OCI-LY7 (cell line): ENCODE measurements at regions of chr20 and their contacts with region 1.

Region 1: DNA sequence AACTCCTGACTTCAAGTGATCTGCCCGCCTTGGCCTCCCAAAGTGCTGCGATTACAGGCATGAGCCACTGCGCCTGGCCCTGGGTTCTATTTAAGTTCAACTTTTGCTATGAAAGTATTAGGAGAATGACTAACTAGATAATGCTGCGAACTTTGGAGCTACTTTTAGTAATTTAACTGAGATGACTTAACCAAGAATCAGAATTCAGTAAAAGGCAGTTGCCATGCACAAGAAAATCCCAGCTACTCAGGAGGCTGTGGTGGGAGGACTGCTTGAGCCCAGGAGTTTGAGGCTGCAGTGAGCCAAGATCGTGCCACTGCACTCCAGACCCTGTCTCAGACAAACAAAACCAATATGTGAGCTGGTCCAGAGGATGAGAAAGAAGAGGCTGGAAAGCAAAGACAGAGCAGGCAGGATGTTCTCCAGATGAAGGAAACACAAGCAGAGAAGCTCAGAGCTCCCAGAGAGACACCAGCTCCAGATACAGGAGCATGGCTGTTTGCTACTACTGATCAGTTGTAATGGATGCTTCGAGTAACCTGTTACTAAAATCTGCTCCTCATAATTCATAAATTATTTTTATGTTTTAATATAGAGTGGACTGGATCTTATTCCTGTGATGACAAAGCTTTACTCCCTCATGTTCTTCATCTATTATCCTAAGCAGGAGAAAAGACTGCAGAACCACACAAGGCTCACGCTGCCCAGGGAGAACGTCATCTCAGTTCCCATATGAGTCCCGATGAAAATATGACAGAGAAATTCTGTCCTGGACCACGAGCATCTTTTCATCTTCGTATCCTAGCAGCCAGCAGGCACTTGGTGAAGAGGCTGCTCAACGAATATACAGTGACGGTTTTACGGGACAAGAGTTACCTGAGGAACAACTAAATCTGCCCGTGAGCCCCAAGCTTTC is 23.8 kb downstream of the ZNF217 start:
- DNase-seq: no peak
- H3K4me3 ChIP-seq: no peak overlapping the region
- H3K27ac ChIP-seq: no peak overlapping the region
- H3K4me1 ChIP-seq: no peaks in the 10 kb centered on the region
- CTCF ChIP-seq: no peak

Region 2: GRCh38 chr20:53547664-53548239 is 22.1 kb before region 1 on chr20:
- CTCF ChIA-PET with region 1: no interaction called
- POLR2A ChIA-PET with region 1: no interaction called
- intact Hi-C with region 1: no loop called
- DNase-seq: peak; percentile 63
- H3K4me3 ChIP-seq: no peak overlapping the region
- H3K27ac ChIP-seq: no peak overlapping the region
- H3K4me1 ChIP-seq: no peaks in the 10 kb centered on the region
- CTCF ChIP-seq: peak; percentile 85

Region 3: DNA sequence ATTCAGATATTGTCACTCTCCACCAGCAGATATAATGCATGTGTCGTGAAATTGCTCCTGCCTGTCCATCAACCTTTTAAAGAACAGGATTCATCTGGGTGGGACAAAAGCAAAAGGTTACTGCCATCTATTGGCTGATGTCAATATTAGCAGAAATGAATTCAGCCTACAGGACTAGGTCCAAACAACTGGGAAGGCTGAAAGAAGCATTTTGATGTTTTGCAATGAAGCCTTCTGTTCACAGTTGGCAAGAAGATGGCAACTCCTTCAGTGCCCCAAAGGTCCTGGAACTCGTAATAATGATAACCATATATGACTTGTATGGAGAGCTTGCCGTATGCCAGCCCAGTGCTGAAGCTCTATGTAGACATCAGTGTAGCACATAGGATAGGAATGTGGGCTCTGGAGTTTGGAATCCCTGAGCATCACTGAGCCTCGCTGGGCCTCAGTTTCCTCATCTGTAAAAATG is 493.0 kb after region 1 on chr20:
- CTCF ChIA-PET with region 1: no interaction called
- POLR2A ChIA-PET with region 1: no interaction called
- intact Hi-C with region 1: loop called (anchors 10 kb)
- DNase-seq: peak; percentile 62
- H3K4me3 ChIP-seq: no peak overlapping the region
- H3K27ac ChIP-seq: no peak overlapping the region
- H3K4me1 ChIP-seq: no peaks in the 10 kb centered on the region
- CTCF ChIP-seq: peak; percentile 90